ENCODE measurements at regions of chr12 and their contacts with region 1.

Region 1: GRCh38 chr12:68675101-68675842 is 11.5 kb upstream of the NUP107 start:
- DNase-seq: peak; percentile 51 to 89
- ATAC-seq: peak; percentile 94 to 97 (median 96)
- H3K4me3 ChIP-seq: no peak overlapping the region
- H3K4me3 Mint-ChIP-seq: peak overlapping the region; percentile 67
- H3K27ac ChIP-seq: peak overlapping the region; percentile 27
- H3K27ac Mint-ChIP-seq: peak overlapping the region; percentile 88
- H3K4me1 ChIP-seq: peaks cover 22% of the 10 kb centered on the region
- H3K4me1 Mint-ChIP-seq: peaks cover 23 to 30% of the 10 kb centered on the region in 2 donors
- H3K27me3 ChIP-seq: no peaks in the 10 kb centered on the region
- H3K27me3 Mint-ChIP-seq: no peaks in the 10 kb centered on the region
- CTCF ChIP-seq: no peak

Region 2: GRCh38 chr12:68591734-68592418 is 83.4 kb before region 1 on chr12:
- intact Hi-C with region 1: loop called (anchors 5 kb)
- DNase-seq: peak in 1 of 2 donors; percentile 82
- ATAC-seq: peak; percentile 65 to 85 (median 66)
- H3K4me3 ChIP-seq: no peak overlapping the region
- H3K4me3 Mint-ChIP-seq: peak overlapping the region; percentile 39
- H3K27ac ChIP-seq: peak overlapping the region; percentile 56
- H3K27ac Mint-ChIP-seq: peak overlapping the region; percentile 84 to 87
- H3K4me1 ChIP-seq: peaks cover 35% of the 10 kb centered on the region
- H3K4me1 Mint-ChIP-seq: peaks cover 33 to 44% of the 10 kb centered on the region in 2 donors
- H3K27me3 ChIP-seq: no peaks in the 10 kb centered on the region
- H3K27me3 Mint-ChIP-seq: no peaks in the 10 kb centered on the region
- CTCF ChIP-seq: no peak